MCF 10A (cell line): ENCODE measurements at regions of chr6 and their contacts with region 1.

Region 1: GRCh38 chr6:49366539-49366938 is 96.5 kb downstream of the MMUT start:
- DNase-seq: no peak
- H3K4me3 Mint-ChIP-seq: no peak overlapping the region
- H3K27ac Mint-ChIP-seq: no peak overlapping the region
- H3K4me1 Mint-ChIP-seq: no peaks in the 10 kb centered on the region
- H3K27me3 Mint-ChIP-seq: no peaks in the 10 kb centered on the region
- CTCF ChIP-seq: no peak

Region 2: DNA sequence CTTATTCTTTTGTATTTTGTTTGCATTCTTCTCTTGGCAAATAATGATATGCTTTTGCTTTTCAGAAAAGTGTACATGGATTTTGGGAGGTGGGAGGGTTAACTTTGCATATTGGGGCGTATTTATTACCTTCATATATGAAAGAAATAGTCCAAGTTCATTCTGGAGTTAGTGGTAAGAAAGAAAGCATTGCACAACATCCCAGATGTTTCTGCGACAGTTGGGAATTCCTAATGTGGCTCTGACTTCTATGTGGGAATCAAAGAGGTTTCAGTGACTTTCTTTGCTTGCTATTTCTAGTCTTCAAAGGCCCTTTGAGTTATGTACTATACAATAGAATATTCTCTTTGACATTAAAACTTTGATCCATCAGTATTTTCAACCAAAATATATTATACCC is 18.4 kb after region 1 on chr6:
- CTCF ChIA-PET with region 1: no interaction called
- POLR2A ChIA-PET with region 1: no interaction called
- intact Hi-C with region 1: loop called (anchors 1 kb)
- DNase-seq: peak; percentile 3
- H3K4me3 Mint-ChIP-seq: no peak overlapping the region
- H3K27ac Mint-ChIP-seq: no peak overlapping the region
- H3K4me1 Mint-ChIP-seq: no peaks in the 10 kb centered on the region
- H3K27me3 Mint-ChIP-seq: no peaks in the 10 kb centered on the region
- CTCF ChIP-seq: no peak